Activated CD4-positive, alpha-beta T cell treated with anti-CD3 and anti-CD28 coated beads for 36 hours (primary cell): ENCODE measurements at regions of chr7 and their contacts with region 1.

Region 1: DNA sequence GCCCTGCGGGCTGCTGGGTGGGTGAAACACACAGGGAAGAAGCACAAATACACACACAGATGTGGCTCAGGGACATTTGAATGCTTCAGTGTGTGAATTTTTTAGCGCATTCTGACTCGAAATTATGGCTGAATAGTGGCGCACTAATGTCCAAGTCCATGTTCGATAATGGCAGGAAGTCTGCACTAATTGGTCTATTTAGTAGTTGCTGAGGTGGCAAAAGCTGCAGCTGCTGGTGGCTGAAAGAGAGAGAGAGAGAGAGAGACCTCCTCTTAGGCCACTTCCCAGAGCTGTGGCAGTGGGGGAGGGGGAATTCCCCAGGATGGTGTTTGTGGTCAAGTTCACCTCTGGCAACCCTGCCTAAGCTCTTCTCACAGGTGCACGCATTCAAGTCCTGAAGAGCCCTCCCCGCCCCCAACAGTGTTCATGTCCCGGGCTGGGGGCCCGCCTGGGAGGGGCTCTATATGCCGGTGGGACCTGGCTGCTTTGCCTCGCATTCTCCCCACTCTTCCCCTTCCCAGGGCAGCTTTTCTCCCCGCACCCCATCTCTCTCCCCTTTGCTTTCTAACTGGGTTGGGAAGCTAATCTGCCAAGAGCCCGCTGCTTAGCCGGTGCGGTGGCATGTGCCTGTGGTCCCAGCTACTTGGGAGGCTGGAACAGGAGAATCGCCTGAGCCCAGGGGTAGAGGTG is 6.0 kb upstream of the MNX1 start:
- DNase-seq: peak; percentile 85
- ATAC-seq: peak; percentile 76
- H3K4me3 Mint-ChIP-seq: no peak overlapping the region
- H3K27ac Mint-ChIP-seq: no peak overlapping the region
- H3K4me1 Mint-ChIP-seq: peaks cover 25% of the 10 kb centered on the region
- H3K27me3 Mint-ChIP-seq: peaks cover 71% of the 10 kb centered on the region

Region 2: DNA sequence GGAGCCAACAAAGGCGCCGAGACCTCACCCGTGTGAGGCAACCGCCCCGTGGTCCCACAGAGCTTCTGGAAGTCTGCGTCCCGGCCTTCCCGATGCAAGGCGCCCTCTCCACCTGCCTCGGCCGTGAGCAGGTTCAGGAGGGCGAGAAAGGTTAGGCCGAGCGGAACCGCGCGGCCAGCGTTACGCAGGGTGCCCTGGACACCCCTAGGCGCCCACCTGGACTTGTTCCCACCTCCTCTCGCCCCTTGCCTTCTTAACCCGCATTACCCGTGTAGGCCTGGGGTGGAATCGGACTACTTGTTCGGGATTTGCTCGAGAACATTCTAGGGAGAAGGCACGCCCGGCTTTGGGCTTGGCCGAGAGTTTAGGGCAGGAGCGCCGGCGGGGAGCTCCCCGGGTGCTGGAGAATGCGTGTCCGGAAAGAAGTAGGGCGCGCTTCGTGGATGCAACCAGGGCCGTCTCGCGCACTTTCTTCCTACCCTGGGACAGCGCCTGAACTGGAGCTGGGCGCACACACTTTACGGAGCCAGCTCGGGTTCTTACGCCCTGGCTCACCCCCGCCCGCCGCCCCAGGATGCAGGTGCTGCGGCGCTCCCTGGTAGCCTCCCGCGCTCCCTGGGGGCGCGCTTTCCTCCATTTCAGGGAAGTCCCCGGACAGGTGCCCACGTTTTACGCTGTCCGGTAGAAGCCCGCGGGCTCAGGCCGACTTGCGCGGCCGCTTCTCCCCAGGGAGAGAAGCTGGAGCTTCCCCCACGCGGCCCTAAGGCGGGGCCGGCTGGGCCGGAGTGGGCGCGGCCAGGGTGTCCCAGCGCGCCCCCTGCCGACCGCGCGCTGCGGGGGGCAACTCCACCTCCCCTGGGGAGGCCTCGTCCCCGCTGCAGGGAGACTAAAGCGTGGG is 1644.4 kb before region 1 on chr7:
- CTCF ChIA-PET with region 1: no interaction called
- POLR2A ChIA-PET with region 1: no interaction called
- intact Hi-C with region 1: loop called in 1 of 2 experiments (anchors 5 kb)
- DNase-seq: peak; percentile 45
- ATAC-seq: peak; percentile 74
- H3K4me3 Mint-ChIP-seq: no peak overlapping the region
- H3K27ac Mint-ChIP-seq: no peak overlapping the region
- H3K4me1 Mint-ChIP-seq: peaks cover 29% of the 10 kb centered on the region
- H3K27me3 Mint-ChIP-seq: peaks cover 65% of the 10 kb centered on the region

Region 3: GRCh38 chr7:157404845-157405481 is 388.5 kb after region 1 on chr7:
- CTCF ChIA-PET with region 1: no interaction called
- POLR2A ChIA-PET with region 1: no interaction called
- intact Hi-C with region 1: no loop called
- DNase-seq: peak; percentile 71
- ATAC-seq: peak; percentile 78
- H3K4me3 Mint-ChIP-seq: no peak overlapping the region
- H3K27ac Mint-ChIP-seq: peak overlapping the region; percentile 82
- H3K4me1 Mint-ChIP-seq: peaks cover 14% of the 10 kb centered on the region
- H3K27me3 Mint-ChIP-seq: no peaks in the 10 kb centered on the region

Region 4: GRCh38 chr7:157690833-157691585 is 674.5 kb after region 1 on chr7:
- CTCF ChIA-PET with region 1: no interaction called
- POLR2A ChIA-PET with region 1: no interaction called
- intact Hi-C with region 1: loop called in 1 of 2 experiments (anchors 5 kb)
- DNase-seq: no peak
- ATAC-seq: peak; percentile 47
- H3K4me3 Mint-ChIP-seq: peak overlapping the region; percentile 19
- H3K27ac Mint-ChIP-seq: no peak overlapping the region
- H3K4me1 Mint-ChIP-seq: peaks cover 18% of the 10 kb centered on the region
- H3K27me3 Mint-ChIP-seq: peaks cover 49% of the 10 kb centered on the region